Dorsolateral prefrontal cortex (tissue), 120 donors: ENCODE measurements at regions of chr2 and their contacts with region 1.

Region 1: GRCh38 chr2:235551965-235552364 is 58.1 kb downstream of the AGAP1 start:
- DNase-seq: peak; percentile 50 to 79 (median 70)
- H3K4me3 ChIP-seq: peak overlapping the region in 9 of 59 donors; percentile 1 to 38 (median 18)
- H3K27ac ChIP-seq: peak overlapping the region in 16 of 59 donors; percentile 5 to 73 (median 44)
- H3K27me3 ChIP-seq: no peaks in the 10 kb centered on the region
- CTCF ChIP-seq: peak; percentile 13 to 87 (median 65)

Region 2: DNA sequence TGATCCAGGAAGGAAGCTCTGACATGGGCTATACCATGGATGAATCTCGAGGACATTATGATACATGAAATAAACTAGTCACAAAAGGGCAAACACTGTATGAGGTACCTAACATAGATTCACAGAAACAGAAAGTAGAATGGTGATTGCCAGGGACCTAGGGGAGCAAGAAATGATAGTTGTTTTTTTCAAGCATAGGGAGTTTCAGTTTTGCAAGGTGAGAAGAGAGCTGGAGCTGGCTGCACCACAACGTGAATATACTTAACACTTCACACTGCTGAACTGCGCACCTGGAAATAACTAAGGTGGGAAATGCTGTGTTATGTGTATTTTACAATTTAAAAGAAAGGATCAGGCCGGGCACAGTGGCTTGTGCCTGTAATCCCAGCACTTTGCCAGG is 71.4 kb before region 1 on chr2:
- intact Hi-C with region 1: no loop called
- DNase-seq: no peak
- H3K4me3 ChIP-seq: no peak overlapping the region
- H3K27ac ChIP-seq: no peak overlapping the region
- H3K27me3 ChIP-seq: peaks cover 0 to 3% (median 0%) of the 10 kb centered on the region in 45 donors
- CTCF ChIP-seq: no peak

Region 3: DNA sequence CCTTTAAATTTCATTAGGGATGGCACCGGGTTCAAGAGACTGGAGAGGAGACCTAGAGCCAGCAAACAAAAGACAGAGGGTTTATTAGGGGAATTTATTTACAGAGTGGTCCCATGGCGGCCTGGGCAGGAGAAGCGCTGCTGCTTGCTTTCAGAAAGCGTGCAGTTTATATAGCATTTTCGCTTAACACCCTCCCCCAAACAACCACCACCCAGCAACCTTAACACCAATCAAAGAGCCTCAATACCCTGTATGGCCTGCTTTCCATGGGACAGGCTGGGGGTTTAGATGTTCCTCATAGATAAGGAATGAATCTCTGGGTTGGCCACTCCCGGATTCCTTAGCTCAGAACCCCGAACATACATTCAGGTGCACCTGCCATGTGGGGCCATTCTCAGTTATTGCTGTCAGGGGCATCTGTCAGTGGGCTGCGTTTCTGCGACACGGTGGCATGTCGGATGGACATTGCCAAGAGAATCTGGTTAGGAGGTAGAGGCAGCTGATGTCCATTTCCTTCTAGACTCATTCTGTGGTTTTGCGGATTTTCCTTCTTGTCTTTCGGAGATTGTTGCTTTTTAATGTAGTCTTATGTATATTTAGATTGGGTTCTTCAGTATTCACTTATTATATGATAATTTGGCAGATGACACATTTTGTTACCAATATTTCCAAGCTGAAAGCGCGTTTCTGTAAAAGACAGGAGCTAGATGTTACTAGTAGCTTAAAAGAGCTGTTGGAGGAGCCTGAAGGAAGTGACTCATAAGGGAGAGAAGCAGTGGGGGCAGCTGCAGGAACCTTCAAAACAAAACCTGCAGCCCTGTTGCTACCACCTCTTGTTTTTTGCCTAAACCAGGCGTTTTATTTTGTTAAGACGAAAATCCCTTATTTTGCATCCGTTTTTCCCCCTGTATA is 50.9 kb before region 1 on chr2:
- intact Hi-C with region 1: loop called in 1 of 2 experiments (anchors 5 kb)
- DNase-seq: no peak
- H3K4me3 ChIP-seq: peak overlapping the region in 45 of 59 donors; percentile 5 to 53 (median 26)
- H3K27ac ChIP-seq: peak overlapping the region in 24 of 59 donors; percentile 5 to 77 (median 46)
- H3K27me3 ChIP-seq: no peaks in the 10 kb centered on the region
- CTCF ChIP-seq: no peak